CD4-positive, alpha-beta memory T cell (primary cell): ENCODE measurements at regions of chr5 and their contacts with region 1.

Region 1: GRCh38 chr5:57499262-57500050 is 16.8 kb upstream of the ACTBL2 start:
- DNase-seq: peak in 4 of 5 donors; percentile 15 to 34 (median 32)
- H3K4me3 ChIP-seq: no peak overlapping the region
- H3K4me3 Mint-ChIP-seq: peak overlapping the region; percentile 63 to 82 (median 74)
- H3K27ac ChIP-seq: no peak overlapping the region
- H3K27ac Mint-ChIP-seq: peak overlapping the region in 5 of 7 donors; percentile 0 to 79 (median 49)
- H3K4me1 ChIP-seq: peaks cover 27% of the 10 kb centered on the region
- H3K4me1 Mint-ChIP-seq: peaks cover 15 to 31% (median 16%) of the 10 kb centered on the region in 4 donors
- H3K27me3 ChIP-seq: no peaks in the 10 kb centered on the region
- H3K27me3 Mint-ChIP-seq: peaks cover 0 to 2% of the 10 kb centered on the region in 2 donors

Region 2: GRCh38 chr5:57468481-57469163 is 30.8 kb before region 1 on chr5:
- CTCF ChIA-PET with region 1: interaction called, 10 read pairs
- POLR2A ChIA-PET with region 1: no interaction called
- intact Hi-C with region 1: no loop called
- DNase-seq: no peak
- H3K4me3 ChIP-seq: no peak overlapping the region
- H3K4me3 Mint-ChIP-seq: no peak overlapping the region
- H3K27ac ChIP-seq: no peak overlapping the region
- H3K27ac Mint-ChIP-seq: no peak overlapping the region
- H3K4me1 ChIP-seq: no peaks in the 10 kb centered on the region
- H3K4me1 Mint-ChIP-seq: no peaks in the 10 kb centered on the region
- H3K27me3 ChIP-seq: no peaks in the 10 kb centered on the region
- H3K27me3 Mint-ChIP-seq: peaks cover 1 to 2% of the 10 kb centered on the region in 2 donors

Region 3: DNA sequence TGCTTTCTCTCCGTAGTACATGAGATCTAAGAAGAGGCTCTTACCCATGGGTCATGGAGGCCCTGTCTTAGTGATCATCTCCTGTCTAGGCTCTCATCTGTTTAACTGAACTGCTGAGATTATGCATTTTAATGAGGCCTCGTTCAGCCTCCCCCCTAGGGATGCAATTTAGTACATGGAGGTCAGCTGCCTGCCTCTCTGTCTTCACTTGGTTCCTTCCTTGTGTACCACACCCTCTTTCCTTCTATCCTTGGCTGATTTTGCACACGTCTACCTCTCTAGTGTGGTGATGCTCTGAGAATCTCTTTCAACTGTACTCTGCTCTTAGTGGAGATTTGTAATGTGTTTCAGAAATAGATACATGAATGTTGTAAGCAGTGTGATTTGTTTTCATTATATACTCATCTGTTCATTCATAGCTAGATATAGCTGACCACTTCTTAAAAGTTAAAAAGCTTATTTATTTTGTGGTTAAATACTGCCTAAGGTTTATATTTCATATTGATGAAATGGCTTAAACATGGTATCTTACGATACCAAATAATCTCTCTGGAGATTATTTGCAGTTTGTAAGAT is 13.3 kb before region 1 on chr5:
- CTCF ChIA-PET with region 1: interaction called, 13 read pairs
- POLR2A ChIA-PET with region 1: interaction called, 5 read pairs
- intact Hi-C with region 1: no loop called
- DNase-seq: no peak
- H3K4me3 ChIP-seq: no peak overlapping the region
- H3K4me3 Mint-ChIP-seq: no peak overlapping the region
- H3K27ac ChIP-seq: no peak overlapping the region
- H3K27ac Mint-ChIP-seq: no peak overlapping the region
- H3K4me1 ChIP-seq: no peaks in the 10 kb centered on the region
- H3K4me1 Mint-ChIP-seq: no peaks in the 10 kb centered on the region
- H3K27me3 ChIP-seq: no peaks in the 10 kb centered on the region
- H3K27me3 Mint-ChIP-seq: peaks cover 0 to 2% of the 10 kb centered on the region in 2 donors

Region 4: DNA sequence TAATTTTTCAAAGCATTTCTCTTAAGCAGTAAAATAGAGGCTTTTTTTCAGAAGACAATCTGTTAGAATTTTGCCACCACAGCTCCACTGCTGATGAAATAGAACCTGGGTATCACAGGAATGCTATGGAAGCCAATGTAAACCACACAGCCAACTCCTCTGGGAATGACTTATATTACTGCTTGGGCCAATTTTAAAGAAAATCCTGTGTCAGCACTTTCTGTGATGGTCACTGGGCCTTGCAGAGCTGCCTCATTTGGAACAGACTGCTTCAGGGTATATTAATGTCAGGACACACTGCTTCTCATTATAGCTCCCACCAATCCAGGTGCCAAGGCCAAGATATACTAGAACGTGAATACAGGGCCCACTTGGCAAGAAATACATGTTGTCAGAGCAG is 127.2 kb after region 1 on chr5:
- CTCF ChIA-PET with region 1: no interaction called
- POLR2A ChIA-PET with region 1: no interaction called
- intact Hi-C with region 1: no loop called
- DNase-seq: no peak
- H3K4me3 ChIP-seq: no peak overlapping the region
- H3K4me3 Mint-ChIP-seq: no peak overlapping the region
- H3K27ac ChIP-seq: no peak overlapping the region
- H3K27ac Mint-ChIP-seq: no peak overlapping the region
- H3K4me1 ChIP-seq: no peaks in the 10 kb centered on the region
- H3K4me1 Mint-ChIP-seq: no peaks in the 10 kb centered on the region
- H3K27me3 ChIP-seq: no peaks in the 10 kb centered on the region
- H3K27me3 Mint-ChIP-seq: peaks cover 3 to 9% of the 10 kb centered on the region in 2 donors

Region 5: GRCh38 chr5:58275516-58275915 is 776.1 kb after region 1 on chr5:
- CTCF ChIA-PET with region 1: no interaction called
- POLR2A ChIA-PET with region 1: no interaction called
- intact Hi-C with region 1: no loop called
- DNase-seq: no peak
- H3K4me3 ChIP-seq: no peak overlapping the region
- H3K4me3 Mint-ChIP-seq: no peak overlapping the region
- H3K27ac ChIP-seq: no peak overlapping the region
- H3K27ac Mint-ChIP-seq: no peak overlapping the region
- H3K4me1 ChIP-seq: no peaks in the 10 kb centered on the region
- H3K4me1 Mint-ChIP-seq: no peaks in the 10 kb centered on the region
- H3K27me3 ChIP-seq: no peaks in the 10 kb centered on the region
- H3K27me3 Mint-ChIP-seq: peaks cover 7% of the 10 kb centered on the region in 2 donors